A549 (cell line): ENCODE measurements at regions of chr11 and their contacts with region 1.

Region 1: GRCh38 chr11:95835768-95836488 is 45.6 kb downstream of the CEP57 start:
- DNase-seq: peak; percentile 48 to 66
- ATAC-seq: peak; percentile 95 to 97
- H3K4me3 ChIP-seq: no peak overlapping the region
- H3K27ac ChIP-seq: no peak overlapping the region
- H3K4me1 ChIP-seq: peaks cover 6% of the 10 kb centered on the region; the same call in 2 of the 3 replicates
- CTCF ChIP-seq: peak; percentile 76
- EP300 ChIP-seq: no peak
- POLR2A ChIP-seq: no peak
- RAD21 ChIP-seq: peak; percentile 79 to 85

Region 2: DNA sequence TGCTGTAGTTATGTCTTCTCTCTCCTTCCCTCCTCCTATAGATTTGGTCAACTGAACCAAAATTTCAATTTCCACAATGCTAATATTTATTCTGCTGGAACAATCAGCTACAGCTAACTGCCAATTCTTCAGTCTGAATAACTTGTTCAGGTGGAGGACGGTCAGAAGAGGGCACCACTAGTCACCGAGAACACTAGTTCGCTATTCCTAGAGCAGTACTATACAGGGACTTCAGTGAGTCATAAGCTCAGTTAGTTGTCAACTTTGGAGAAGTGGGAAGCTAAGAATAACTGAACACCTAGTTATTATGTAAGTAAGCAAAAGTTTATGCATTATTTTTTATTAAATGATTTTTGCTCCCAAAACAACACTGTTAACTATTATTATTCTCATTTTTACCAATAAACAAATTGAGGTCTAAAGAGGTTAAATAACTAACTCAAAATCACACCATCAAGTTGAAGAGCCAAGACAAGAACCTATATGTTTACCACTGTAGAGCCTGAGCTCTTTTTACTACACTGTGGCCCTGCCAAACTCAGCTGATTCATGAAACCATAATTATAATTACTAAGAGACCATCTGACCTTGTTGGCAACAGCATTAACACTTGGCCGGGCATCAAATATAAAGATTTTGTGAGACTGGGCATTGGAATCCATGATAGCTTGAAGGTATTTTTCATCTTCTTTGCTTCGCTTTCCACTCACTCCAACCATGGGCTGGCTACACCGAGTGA is 13.3 kb after region 1 on chr11:
- CTCF ChIA-PET with region 1: interaction called, 16 read pairs
- POLR2A ChIA-PET with region 1: no interaction called
- DNase-seq: peak; percentile 8 to 64
- ATAC-seq: peak; percentile 80 to 88; a peak in 4 of 6 replicates
- H3K4me3 ChIP-seq: no peak overlapping the region
- H3K27ac ChIP-seq: no peak overlapping the region
- H3K4me1 ChIP-seq: peaks cover 7% of the 10 kb centered on the region; the same call in 2 of the 3 replicates
- CTCF ChIP-seq: peak; percentile 35; the same call in 2 of the 3 replicates
- EP300 ChIP-seq: no peak
- POLR2A ChIP-seq: no peak
- RAD21 ChIP-seq: peak; percentile 40 to 52; a peak in 2 of 5 replicates

Region 3: DNA sequence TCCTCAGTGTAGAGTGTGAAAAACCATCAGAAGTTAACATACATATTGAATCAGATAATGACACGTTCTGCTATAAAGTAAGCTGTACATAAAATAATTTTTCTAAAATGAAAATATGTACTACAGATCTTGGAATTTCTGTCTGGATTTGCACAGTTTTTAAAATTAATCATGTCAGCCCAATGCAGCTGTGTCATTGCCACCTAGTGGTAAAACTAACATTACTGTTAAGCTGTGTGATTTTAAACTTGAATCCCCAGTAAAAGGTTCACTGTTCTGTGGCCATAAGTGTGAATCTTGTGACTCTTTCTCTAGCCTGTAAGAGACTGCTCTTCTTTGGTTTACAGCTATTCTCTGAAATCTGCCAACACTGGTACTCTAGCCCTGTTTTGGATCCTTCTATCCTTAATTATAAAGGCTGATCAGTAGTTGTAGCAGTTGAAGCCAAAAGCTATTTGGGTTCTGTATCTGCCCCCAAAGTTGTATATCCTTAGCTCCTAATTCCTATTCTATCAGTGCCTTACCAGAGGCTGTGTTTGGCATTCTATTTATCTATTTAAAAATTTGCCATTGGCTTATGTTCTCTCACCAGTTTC is 557.9 kb after region 1 on chr11:
- CTCF ChIA-PET with region 1: interaction called, 38 read pairs
- POLR2A ChIA-PET with region 1: interaction called, 6 read pairs
- DNase-seq: peak; percentile 20 to 43
- ATAC-seq: no peak
- H3K4me3 ChIP-seq: no peak overlapping the region
- H3K27ac ChIP-seq: no peak overlapping the region
- H3K4me1 ChIP-seq: no peaks in the 10 kb centered on the region
- CTCF ChIP-seq: peak; percentile 77
- EP300 ChIP-seq: no peak
- POLR2A ChIP-seq: no peak
- RAD21 ChIP-seq: peak; percentile 74 to 77

Region 4: GRCh38 chr11:96424693-96425092 is 588.8 kb after region 1 on chr11:
- CTCF ChIA-PET with region 1: interaction called, 11 read pairs
- POLR2A ChIA-PET with region 1: no interaction called
- DNase-seq: no peak
- ATAC-seq: no peak
- H3K4me3 ChIP-seq: no peak overlapping the region
- H3K27ac ChIP-seq: no peak overlapping the region
- H3K4me1 ChIP-seq: no peaks in the 10 kb centered on the region
- CTCF ChIP-seq: no peak
- EP300 ChIP-seq: no peak
- POLR2A ChIP-seq: no peak
- RAD21 ChIP-seq: no peak